A549 (cell line): ENCODE measurements at regions of chr1 and their contacts with region 1.

Region 1: GRCh38 chr1:209895709-209896108 is 42.3 kb upstream of the SYT14 start:
- DNase-seq: no peak
- ATAC-seq: peak in 1 of 2 experiments; percentile 20; a peak in 1 of 6 replicates
- H3K4me3 ChIP-seq: no peak overlapping the region
- H3K27ac ChIP-seq: no peak overlapping the region
- H3K4me1 ChIP-seq: peaks cover 4% of the 10 kb centered on the region; the same call in 1 of the 3 replicates
- CTCF ChIP-seq: no peak
- EP300 ChIP-seq: no peak
- POLR2A ChIP-seq: no peak
- RAD21 ChIP-seq: no peak

Region 2: GRCh38 chr1:209875515-209875914 is 20.2 kb before region 1 on chr1:
- CTCF ChIA-PET with region 1: interaction called, 10 read pairs
- POLR2A ChIA-PET with region 1: no interaction called
- DNase-seq: peak; percentile 33 to 52
- ATAC-seq: peak; percentile 87 to 95
- H3K4me3 ChIP-seq: no peak overlapping the region
- H3K27ac ChIP-seq: no peak overlapping the region
- H3K4me1 ChIP-seq: 0 out of 3 replicates have a peak, but pooled peaks cover 2% of the 10 kb centered on the region
- CTCF ChIP-seq: peak; percentile 44
- EP300 ChIP-seq: no peak
- POLR2A ChIP-seq: no peak
- RAD21 ChIP-seq: peak; percentile 34 to 42; a peak in 4 of 5 replicates

Region 3: DNA sequence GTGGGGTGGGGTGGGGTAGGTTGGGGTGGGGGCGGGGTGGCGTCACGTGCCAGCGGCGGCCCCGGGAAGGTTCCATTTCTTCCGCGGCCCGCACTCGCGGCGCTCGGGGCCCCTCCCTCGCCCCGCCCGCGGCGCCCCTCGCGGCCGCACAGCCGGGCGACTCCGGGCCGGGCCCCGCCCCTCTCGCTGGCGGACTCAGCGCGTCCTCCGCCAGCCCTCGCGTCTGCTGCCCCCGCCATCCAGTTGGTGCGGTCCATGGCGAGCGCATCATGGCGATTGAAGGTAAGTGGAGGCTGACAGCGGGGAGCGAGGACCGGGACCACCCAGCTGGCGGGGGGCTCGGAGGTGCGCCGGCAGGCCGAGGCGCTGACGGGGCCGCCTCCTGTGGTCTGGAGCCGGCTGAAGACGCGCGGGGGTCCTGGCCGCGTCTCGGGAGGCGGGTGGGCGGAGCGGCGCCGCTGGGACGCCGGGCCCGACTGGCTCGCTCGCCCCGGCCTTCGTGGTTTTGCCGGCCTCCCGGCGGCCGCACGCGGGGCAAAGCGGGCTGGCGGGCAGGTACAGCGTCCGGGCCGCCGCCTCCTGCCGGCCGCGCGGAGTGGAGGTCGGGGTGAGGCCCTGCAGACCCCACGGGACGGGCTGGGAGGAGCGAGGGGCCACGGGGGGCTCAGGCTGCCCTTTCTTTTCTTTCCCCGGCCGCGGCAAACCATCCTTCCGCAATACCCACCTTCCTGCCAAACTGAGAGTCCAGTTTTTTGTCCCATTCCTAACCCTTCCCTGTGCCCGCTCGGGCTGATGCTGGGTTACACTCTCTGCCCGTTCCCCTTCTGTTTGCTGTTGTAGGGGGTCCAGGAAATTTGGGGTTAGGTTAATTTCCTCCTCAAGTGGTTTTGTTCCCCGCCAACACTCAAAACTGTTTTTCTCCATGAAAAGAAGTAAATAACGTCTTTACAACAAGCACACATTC is 42.6 kb after region 1 on chr1 and contains the start of gene SYT14:
- CTCF ChIA-PET with region 1: no interaction called
- POLR2A ChIA-PET with region 1: no interaction called
- DNase-seq: peak in 1 of 2 experiments; percentile 8
- ATAC-seq: peak; percentile 64 to 75
- H3K4me3 ChIP-seq: peak within 1 kb of the TSS; percentile 49
- H3K27ac ChIP-seq: no peak within 1 kb of the TSS
- H3K4me1 ChIP-seq: peaks cover 5% of the 10 kb centered on the region; the same call in 2 of the 3 replicates
- CTCF ChIP-seq: no peak
- EP300 ChIP-seq: no peak
- POLR2A ChIP-seq: no peak
- RAD21 ChIP-seq: no peak
- polyA plus RNA-seq, gene SYT14: 0.01 TPM in 2 replicates

Region 4: GRCh38 chr1:210072129-210072528 is 176.4 kb after region 1 on chr1:
- CTCF ChIA-PET with region 1: no interaction called
- POLR2A ChIA-PET with region 1: no interaction called
- DNase-seq: no peak
- ATAC-seq: no peak
- H3K4me3 ChIP-seq: no peak overlapping the region
- H3K27ac ChIP-seq: no peak overlapping the region
- H3K4me1 ChIP-seq: no peaks in the 10 kb centered on the region
- CTCF ChIP-seq: no peak
- EP300 ChIP-seq: no peak
- POLR2A ChIP-seq: no peak
- RAD21 ChIP-seq: no peak